Head of caudate nucleus (tissue), 42 donors: ENCODE measurements at regions of chr11 and their contacts with region 1.

Region 1: GRCh38 chr11:45298718-45299117 is 12.6 kb upstream of the SYT13 start:
- DNase-seq: no peak

Region 2: GRCh38 chr11:44936525-44936924 is 362.2 kb before region 1 on chr11:
- intact Hi-C with region 1: loop called (anchors 10 kb)
- DNase-seq: peak; percentile 70 to 96 (median 90)

Region 3: GRCh38 chr11:45110562-45110961 is 188.2 kb before region 1 on chr11:
- intact Hi-C with region 1: loop called (anchors 5 kb)
- DNase-seq: peak in 21 of 42 donors; percentile 28 to 82 (median 63)